Esophagus squamous epithelium (tissue), 5 donors: ENCODE measurements at regions of chr13 and their contacts with region 1.

Region 1: DNA sequence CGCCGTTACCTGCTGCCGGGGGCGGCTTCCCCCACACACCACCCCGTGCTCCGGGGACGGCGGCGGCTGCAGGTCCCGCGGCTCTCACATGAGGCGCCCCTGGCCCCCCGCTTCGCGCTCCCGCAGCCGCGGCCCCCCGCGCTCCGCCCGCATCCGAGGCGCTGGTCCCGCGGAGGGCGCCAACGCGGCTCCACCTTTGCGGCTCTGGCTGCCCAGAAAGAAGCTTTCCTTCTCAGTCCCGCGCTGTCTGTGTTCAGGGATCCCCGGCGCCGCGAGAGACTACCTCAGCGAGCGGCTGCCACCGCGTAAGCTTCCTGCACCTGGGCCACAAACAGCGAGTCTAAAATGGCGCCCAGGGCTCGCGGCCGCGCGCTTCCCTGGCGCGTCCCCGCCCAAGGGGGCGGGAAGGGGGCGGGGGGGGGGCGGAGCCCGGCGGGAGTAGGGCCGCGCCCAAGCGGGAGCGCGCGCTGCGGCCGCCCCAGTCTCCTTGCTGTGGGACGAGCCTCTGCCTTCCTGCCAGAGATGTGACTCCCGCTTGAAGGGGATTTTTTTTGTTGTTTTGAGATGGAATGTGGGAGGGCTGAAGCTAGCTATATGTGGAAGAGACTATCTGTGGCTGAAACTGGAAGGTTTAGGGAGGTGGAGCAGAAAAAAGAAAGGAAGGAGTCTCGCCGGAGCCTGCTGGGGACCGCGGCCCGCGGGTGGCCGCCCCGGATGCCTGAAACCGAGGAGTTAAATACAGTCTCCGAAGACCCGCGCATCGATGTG is at the start of gene FBXL3:
- DNase-seq: peak; percentile 25
- H3K4me3 ChIP-seq: peak within 1 kb of the TSS; percentile 77 to 99 (median 88)
- H3K27ac ChIP-seq: peak within 1 kb of the TSS; percentile 98 to 100 (median 100)
- H3K4me1 ChIP-seq: peaks cover 28 to 48% (median 40%) of the 10 kb centered on the region in 3 donors
- H3K27me3 ChIP-seq: no peaks in the 10 kb centered on the region
- CTCF ChIP-seq: no peak
- POLR2A ChIP-seq: peak in 3 of 4 donors; percentile 15 to 80 (median 37)
- total RNA-seq, gene FBXL3: 43.5 to 81.6 (median 51.7) TPM

Region 2: GRCh38 chr13:76764429-76764828 is 262.6 kb before region 1 on chr13:
- intact Hi-C with region 1: no loop called
- DNase-seq: no peak
- H3K4me3 ChIP-seq: no peak overlapping the region
- H3K27ac ChIP-seq: peak overlapping the region in 3 of 4 donors; percentile 13 to 65 (median 37)
- H3K4me1 ChIP-seq: peaks cover 0 to 7% (median 0%) of the 10 kb centered on the region in 3 donors
- H3K27me3 ChIP-seq: no peaks in the 10 kb centered on the region
- CTCF ChIP-seq: no peak
- POLR2A ChIP-seq: no peak

Region 3: GRCh38 chr13:76868371-76868770 is 158.6 kb before region 1 on chr13:
- intact Hi-C with region 1: no loop called
- DNase-seq: no peak
- H3K4me3 ChIP-seq: no peak overlapping the region
- H3K27ac ChIP-seq: no peak overlapping the region
- H3K4me1 ChIP-seq: no peaks in the 10 kb centered on the region
- H3K27me3 ChIP-seq: peaks cover 0 to 5% (median 0%) of the 10 kb centered on the region in 4 donors
- CTCF ChIP-seq: no peak
- POLR2A ChIP-seq: no peak

Region 4: GRCh38 chr13:77329133-77329910 is 302.3 kb after region 1 on chr13:
- intact Hi-C with region 1: loop called (anchors 10 kb)
- DNase-seq: peak; percentile 65
- H3K4me3 ChIP-seq: peak overlapping the region; percentile 67 to 86 (median 76)
- H3K27ac ChIP-seq: peak overlapping the region; percentile 89 to 94 (median 93)
- H3K4me1 ChIP-seq: peaks cover 13 to 46% (median 20%) of the 10 kb centered on the region in 3 donors
- H3K27me3 ChIP-seq: no peaks in the 10 kb centered on the region
- CTCF ChIP-seq: peak in 1 of 6 experiments; percentile 6
- POLR2A ChIP-seq: peak in 2 of 4 donors; percentile 51 to 81